ENCODE measurements at regions of chr19 and their contacts with region 1.

Region 1: DNA sequence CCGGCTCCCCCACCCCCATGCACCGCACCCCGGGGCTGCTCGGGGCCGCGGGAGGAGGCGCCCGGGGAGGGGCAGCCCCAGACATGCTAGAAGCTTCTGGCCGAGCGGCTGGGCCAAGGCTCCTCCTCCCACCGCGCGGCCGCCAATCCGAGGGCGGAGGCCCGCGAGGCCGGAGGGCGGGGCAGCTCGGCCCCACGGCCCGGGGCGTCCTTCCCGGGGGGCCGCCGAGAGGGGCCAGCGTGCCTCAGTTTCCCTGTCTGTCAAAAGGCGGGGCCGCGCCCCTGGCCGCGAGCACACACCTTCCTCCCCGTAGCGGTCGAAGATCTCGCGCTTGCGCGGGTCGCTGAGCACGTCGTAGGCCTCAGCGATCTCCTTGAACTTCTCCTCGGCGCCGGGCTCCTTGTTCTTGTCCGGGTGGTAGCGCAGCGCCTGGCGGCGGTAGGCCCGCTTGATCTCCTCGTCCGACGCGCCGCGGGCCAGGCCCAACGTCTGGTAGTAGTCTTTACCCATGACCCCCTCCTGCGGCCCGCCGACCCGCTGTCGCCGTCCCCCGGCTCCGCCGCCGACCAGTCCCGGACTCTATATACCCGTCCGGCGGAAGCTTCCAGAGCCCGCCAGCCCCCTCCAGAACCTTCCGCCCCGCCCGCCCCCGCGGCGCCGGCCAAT is at the start of gene DNAJB1:
- DNase-seq: peak; percentile 78
- ATAC-seq: peak; percentile 48
- H3K4me3 Mint-ChIP-seq: peak within 1 kb of the TSS; percentile 91
- H3K27ac Mint-ChIP-seq: peak within 1 kb of the TSS; percentile 95
- H3K4me1 Mint-ChIP-seq: peaks cover 65% of the 10 kb centered on the region
- H3K27me3 Mint-ChIP-seq: no peaks in the 10 kb centered on the region
- CTCF ChIP-seq: no peak
- total RNA-seq, gene DNAJB1: 56.1 and 58.7 TPM in 2 replicates

Region 2: DNA sequence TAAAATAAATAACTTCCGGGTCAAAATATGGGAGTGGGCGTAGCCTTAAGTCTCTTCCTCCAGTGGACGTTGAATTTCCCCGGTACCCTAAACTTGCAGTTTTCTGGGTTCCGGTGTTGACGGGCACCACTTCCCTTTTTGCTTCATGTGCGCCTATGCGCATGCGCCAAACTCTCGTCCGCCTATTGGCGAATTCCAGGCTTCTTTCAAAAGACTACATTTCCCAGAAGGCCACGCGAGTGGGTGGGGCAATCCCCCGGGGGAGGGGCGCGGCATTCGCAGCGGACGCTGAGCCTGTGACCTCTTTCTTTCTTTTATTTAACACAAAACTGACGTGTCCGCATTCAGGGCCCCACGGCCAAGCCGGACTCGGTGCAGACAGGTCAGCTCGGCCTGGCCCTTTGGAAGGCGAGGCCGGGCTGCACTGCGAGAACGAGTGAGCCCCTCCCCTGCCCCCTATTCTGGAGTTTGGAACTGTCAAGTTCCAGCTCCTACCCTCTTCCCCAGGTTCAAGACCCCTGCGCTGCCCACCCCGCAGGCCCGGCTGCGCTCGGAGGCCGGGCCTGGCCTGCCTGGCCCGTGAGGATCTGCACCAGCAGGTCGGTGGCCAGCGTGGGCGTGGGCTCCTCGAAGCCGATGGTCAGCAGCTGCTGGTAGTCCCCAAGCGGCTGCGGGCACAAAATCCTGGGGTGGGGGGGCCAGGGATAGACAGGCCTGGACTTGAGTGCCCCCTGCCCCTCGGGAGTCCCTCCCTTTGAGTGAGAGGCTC is 436.5 kb before region 1 on chr19:
- CTCF ChIA-PET with region 1: no interaction called
- POLR2A ChIA-PET with region 1: interaction called, 11 read pairs
- intact Hi-C with region 1: no loop called
- DNase-seq: peak; percentile 98
- ATAC-seq: peak; percentile 91
- H3K4me3 Mint-ChIP-seq: peak overlapping the region; percentile 94
- H3K27ac Mint-ChIP-seq: peak overlapping the region; percentile 95
- H3K4me1 Mint-ChIP-seq: peaks cover 17% of the 10 kb centered on the region
- H3K27me3 Mint-ChIP-seq: no peaks in the 10 kb centered on the region
- CTCF ChIP-seq: no peak

Region 3: GRCh38 chr19:14198384-14199376 is 319.3 kb before region 1 on chr19:
- CTCF ChIA-PET with region 1: no interaction called
- POLR2A ChIA-PET with region 1: no interaction called
- intact Hi-C with region 1: no loop called
- DNase-seq: no peak
- ATAC-seq: no peak
- H3K4me3 Mint-ChIP-seq: no peak overlapping the region
- H3K27ac Mint-ChIP-seq: no peak overlapping the region
- H3K4me1 Mint-ChIP-seq: peaks cover 10% of the 10 kb centered on the region
- H3K27me3 Mint-ChIP-seq: peaks cover 5% of the 10 kb centered on the region
- CTCF ChIP-seq: no peak

Region 4: GRCh38 chr19:14408491-14409145 is 109.4 kb before region 1 on chr19:
- CTCF ChIA-PET with region 1: no interaction called
- POLR2A ChIA-PET with region 1: no interaction called
- intact Hi-C with region 1: no loop called
- DNase-seq: no peak
- ATAC-seq: no peak
- H3K4me3 Mint-ChIP-seq: no peak overlapping the region
- H3K27ac Mint-ChIP-seq: peak overlapping the region; percentile 35
- H3K4me1 Mint-ChIP-seq: peaks cover 41% of the 10 kb centered on the region
- H3K27me3 Mint-ChIP-seq: no peaks in the 10 kb centered on the region
- CTCF ChIP-seq: no peak

Region 5: DNA sequence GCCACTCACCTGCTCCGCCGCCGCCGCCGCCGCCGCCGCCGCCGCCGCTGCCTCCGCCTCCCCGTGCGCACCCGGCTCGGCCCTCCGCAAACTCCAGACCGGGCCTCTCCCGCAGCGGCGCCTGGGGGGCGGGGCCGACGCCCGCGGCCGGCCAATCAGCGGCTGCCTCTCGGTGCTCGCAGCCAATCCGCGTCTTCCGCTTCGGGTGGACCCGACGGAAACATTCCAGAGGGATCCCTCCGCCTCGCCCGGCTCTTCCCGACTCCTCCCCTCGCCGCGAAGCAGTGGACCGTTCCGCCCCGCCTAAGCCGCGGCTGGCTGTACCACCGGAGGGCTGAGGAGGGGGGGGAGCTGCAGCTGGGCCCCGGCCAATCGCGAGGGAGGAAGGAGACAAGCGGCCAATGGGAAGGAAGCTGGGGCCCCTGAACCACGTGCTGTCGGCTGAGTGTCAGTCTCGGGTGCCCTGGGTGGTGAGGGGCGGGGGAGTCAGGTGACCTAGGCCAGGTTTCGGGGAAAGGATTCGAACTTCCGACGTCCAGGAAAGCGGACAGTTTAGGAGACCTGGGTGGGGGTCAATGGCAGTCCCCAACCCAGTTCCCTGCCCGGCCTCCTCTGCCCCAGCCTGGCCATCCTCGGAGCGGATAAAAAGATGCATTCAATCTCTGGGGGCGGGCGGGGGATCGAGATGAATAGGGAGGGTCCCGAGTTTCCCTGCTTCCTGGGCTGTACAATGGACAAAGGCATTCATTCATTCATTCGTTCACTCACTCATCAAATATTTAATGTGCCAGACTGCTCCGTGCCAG is 21.7 kb before region 1 on chr19 and contains the start of gene GIPC1:
- CTCF ChIA-PET with region 1: no interaction called
- POLR2A ChIA-PET with region 1: interaction called, 24 read pairs
- intact Hi-C with region 1: loop called (anchors 2 kb)
- DNase-seq: peak; percentile 81
- ATAC-seq: peak; percentile 92
- H3K4me3 Mint-ChIP-seq: peak within 1 kb of the TSS; percentile 82
- H3K27ac Mint-ChIP-seq: peak within 1 kb of the TSS; percentile 42
- H3K4me1 Mint-ChIP-seq: peaks cover 17% of the 10 kb centered on the region
- H3K27me3 Mint-ChIP-seq: no peaks in the 10 kb centered on the region
- CTCF ChIP-seq: no peak
- total RNA-seq, gene GIPC1: 13.9 and 15.3 TPM in 2 replicates

Region 6: GRCh38 chr19:14529254-14530004 is 11.5 kb after region 1 on chr19 and contains the start of gene TECR:
- CTCF ChIA-PET with region 1: no interaction called
- POLR2A ChIA-PET with region 1: interaction called, 31 read pairs
- intact Hi-C with region 1: loop called (anchors 1 kb)
- DNase-seq: peak; percentile 99
- ATAC-seq: peak; percentile 96
- H3K4me3 Mint-ChIP-seq: peak within 1 kb of the TSS; percentile 95
- H3K27ac Mint-ChIP-seq: peak within 1 kb of the TSS; percentile 96
- H3K4me1 Mint-ChIP-seq: peaks cover 31% of the 10 kb centered on the region
- H3K27me3 Mint-ChIP-seq: no peaks in the 10 kb centered on the region
- CTCF ChIP-seq: no peak
- total RNA-seq, gene TECR: 55.3 and 58.6 TPM in 2 replicates

Region 7: DNA sequence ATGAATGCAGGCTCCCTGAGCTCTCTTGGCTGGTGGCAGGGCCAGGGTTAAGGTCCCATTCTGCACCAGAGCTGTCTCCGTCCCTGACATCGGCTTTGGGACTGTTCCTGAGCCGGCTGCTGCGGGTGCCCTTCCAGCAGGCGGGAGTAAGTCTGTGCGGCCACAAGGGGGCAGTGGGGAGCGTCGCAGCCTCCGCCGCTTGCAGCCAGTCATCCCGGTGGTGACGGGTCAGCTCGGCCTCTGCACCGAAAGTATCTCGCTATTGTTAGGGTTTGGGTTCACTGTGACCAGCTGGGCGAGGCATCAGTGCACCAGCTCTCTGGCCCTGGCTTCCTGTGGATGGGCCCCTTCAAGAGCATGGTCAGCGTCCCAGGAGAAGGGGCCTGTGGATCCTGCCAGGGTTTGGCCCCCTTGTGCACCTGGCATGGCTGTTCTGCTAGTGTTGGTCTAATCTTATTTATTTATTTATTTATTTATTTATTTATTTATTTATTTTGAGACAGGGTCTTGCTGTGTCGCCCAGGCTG is 38.8 kb after region 1 on chr19:
- CTCF ChIA-PET with region 1: interaction called, 3 read pairs
- POLR2A ChIA-PET with region 1: interaction called, 9 read pairs
- intact Hi-C with region 1: loop called (anchors 1 kb)
- DNase-seq: peak; percentile 67
- ATAC-seq: peak; percentile 92
- H3K4me3 Mint-ChIP-seq: peak overlapping the region; percentile 35
- H3K27ac Mint-ChIP-seq: no peak overlapping the region
- H3K4me1 Mint-ChIP-seq: peaks cover 28% of the 10 kb centered on the region
- H3K27me3 Mint-ChIP-seq: no peaks in the 10 kb centered on the region
- CTCF ChIP-seq: peak; percentile 66